T-cell (primary cell): ENCODE measurements at regions of chr6 and their contacts with region 1.

Region 1: GRCh38 chr6:4093288-4093687 is 14.4 kb upstream of the FAM217A start:
- DNase-seq: no peak
- ATAC-seq: no peak
- H3K4me3 ChIP-seq: no peak overlapping the region
- H3K4me3 Mint-ChIP-seq: no peak overlapping the region
- H3K27ac ChIP-seq: no peak overlapping the region
- H3K27ac Mint-ChIP-seq: no peak overlapping the region
- H3K4me1 ChIP-seq: no peaks in the 10 kb centered on the region
- H3K4me1 Mint-ChIP-seq: no peaks in the 10 kb centered on the region
- H3K27me3 ChIP-seq: peaks cover 0 to 2% of the 10 kb centered on the region in 2 experiments
- H3K27me3 Mint-ChIP-seq: no peaks in the 10 kb centered on the region

Region 2: GRCh38 chr6:4039348-4039747 is 53.9 kb before region 1 on chr6:
- CTCF ChIA-PET with region 1: interaction called in 1 of 2 experiments, 16 read pairs
- POLR2A ChIA-PET with region 1: no interaction called
- DNase-seq: no peak
- ATAC-seq: no peak
- H3K4me3 ChIP-seq: no peak overlapping the region
- H3K4me3 Mint-ChIP-seq: no peak overlapping the region
- H3K27ac ChIP-seq: no peak overlapping the region
- H3K27ac Mint-ChIP-seq: no peak overlapping the region
- H3K4me1 ChIP-seq: peaks cover 0 to 15% of the 10 kb centered on the region in 2 experiments
- H3K4me1 Mint-ChIP-seq: peaks cover 32 to 47% (median 41%) of the 10 kb centered on the region in 3 donors
- H3K27me3 ChIP-seq: no peaks in the 10 kb centered on the region
- H3K27me3 Mint-ChIP-seq: no peaks in the 10 kb centered on the region

Region 3: GRCh38 chr6:4066029-4066755 is 27.1 kb before region 1 on chr6:
- CTCF ChIA-PET with region 1: no interaction called
- POLR2A ChIA-PET with region 1: no interaction called
- DNase-seq: no peak
- ATAC-seq: no peak
- H3K4me3 ChIP-seq: no peak overlapping the region
- H3K4me3 Mint-ChIP-seq: no peak overlapping the region
- H3K27ac ChIP-seq: no peak overlapping the region
- H3K27ac Mint-ChIP-seq: peak overlapping the region in 1 of 2 donors; percentile 66
- H3K4me1 ChIP-seq: no peaks in the 10 kb centered on the region
- H3K4me1 Mint-ChIP-seq: no peaks in the 10 kb centered on the region
- H3K27me3 ChIP-seq: no peaks in the 10 kb centered on the region
- H3K27me3 Mint-ChIP-seq: no peaks in the 10 kb centered on the region